PC-9 (cell line): ENCODE measurements at regions of chr9 and their contacts with region 1.

Region 1: GRCh38 chr9:613771-614347 is 227.6 kb upstream of the DMRT1 start:
- DNase-seq: peak; percentile 52 to 68
- H3K4me3 ChIP-seq: no peak overlapping the region
- H3K27ac ChIP-seq: no peak overlapping the region
- H3K4me1 ChIP-seq: no peaks in the 10 kb centered on the region
- H3K27me3 ChIP-seq: no peaks in the 10 kb centered on the region
- CTCF ChIP-seq: peak; percentile 72

Region 2: GRCh38 chr9:385818-386398 is 228.0 kb before region 1 on chr9:
- CTCF ChIA-PET with region 1: no interaction called
- POLR2A ChIA-PET with region 1: no interaction called
- intact Hi-C with region 1: loop called (anchors 1 kb)
- DNase-seq: peak; percentile 47 to 52
- H3K4me3 ChIP-seq: no peak overlapping the region
- H3K27ac ChIP-seq: no peak overlapping the region
- H3K4me1 ChIP-seq: no peaks in the 10 kb centered on the region
- H3K27me3 ChIP-seq: no peaks in the 10 kb centered on the region
- CTCF ChIP-seq: peak; percentile 93

Region 3: DNA sequence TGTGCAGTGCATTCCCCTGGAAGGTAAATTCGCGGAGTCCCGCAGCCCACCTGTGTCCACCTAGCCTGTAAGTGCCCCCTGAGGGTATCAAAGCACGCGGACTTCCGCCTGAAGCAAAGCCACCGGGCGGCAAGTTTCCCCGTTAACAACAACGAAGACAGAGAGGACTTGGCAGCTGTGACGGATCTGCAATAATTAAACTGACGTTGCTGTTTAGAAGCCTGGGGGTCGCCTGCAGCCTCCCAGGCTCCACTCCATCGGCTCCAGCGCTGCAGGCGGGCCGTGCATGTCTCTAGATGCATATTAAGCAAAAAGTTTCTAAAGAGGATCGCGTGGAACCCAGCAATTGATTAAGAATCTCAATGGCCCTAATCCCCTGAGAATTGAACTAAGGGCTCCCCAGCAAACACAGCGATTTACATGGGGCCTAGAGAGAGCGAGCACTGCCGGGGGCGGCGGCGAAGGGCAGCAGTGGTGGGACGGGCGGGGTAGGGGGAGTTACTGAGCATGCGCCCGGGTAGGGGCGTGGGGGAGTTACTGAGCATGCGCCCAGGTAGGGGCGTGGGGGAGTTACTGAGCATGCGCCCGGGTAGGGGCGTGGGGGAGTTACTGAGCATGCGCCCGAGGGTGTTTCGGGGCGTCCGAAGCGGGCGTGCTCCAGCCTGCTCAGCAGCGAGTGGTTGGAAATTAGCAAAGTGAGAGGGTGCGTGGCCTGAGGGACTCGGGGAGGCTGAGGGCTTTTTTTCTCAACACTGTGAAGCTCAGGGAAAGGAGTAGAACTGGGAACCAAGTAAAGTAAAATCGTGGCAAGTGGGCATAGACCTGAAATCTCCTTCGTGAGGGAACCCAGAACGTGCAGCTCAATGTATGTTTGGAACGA is 143.9 kb before region 1 on chr9:
- CTCF ChIA-PET with region 1: no interaction called
- POLR2A ChIA-PET with region 1: no interaction called
- intact Hi-C with region 1: no loop called
- DNase-seq: peak; percentile 73 to 79
- H3K4me3 ChIP-seq: peak overlapping the region; percentile 78
- H3K27ac ChIP-seq: peak overlapping the region; percentile 67
- H3K4me1 ChIP-seq: peaks cover 23% of the 10 kb centered on the region
- H3K27me3 ChIP-seq: no peaks in the 10 kb centered on the region
- CTCF ChIP-seq: no peak

Region 4: DNA sequence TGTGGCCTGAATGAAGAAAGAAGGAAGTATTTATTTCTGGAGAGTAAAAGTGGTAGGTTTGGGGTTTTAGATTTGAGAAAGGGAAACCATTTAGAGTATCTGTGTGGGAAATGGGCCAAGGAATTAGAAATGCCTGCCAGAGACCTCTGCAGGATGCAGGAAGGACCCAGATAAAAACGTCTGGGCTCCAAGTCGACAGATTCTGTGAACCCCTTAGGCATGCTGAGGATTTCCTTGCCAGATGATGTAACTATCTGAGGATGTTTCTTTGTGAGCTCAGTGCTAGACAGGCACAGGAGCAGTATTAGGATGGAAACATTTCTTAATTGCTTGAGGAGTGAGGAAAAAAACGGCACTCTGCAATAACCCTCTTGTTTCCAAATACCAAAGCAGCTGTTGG is 24.1 kb before region 1 on chr9:
- CTCF ChIA-PET with region 1: no interaction called
- POLR2A ChIA-PET with region 1: no interaction called
- intact Hi-C with region 1: no loop called
- DNase-seq: no peak
- H3K4me3 ChIP-seq: no peak overlapping the region
- H3K27ac ChIP-seq: peak overlapping the region; percentile 47
- H3K4me1 ChIP-seq: peaks cover 14% of the 10 kb centered on the region; the same call in 1 of the 2 replicates
- H3K27me3 ChIP-seq: no peaks in the 10 kb centered on the region
- CTCF ChIP-seq: no peak

Region 5: DNA sequence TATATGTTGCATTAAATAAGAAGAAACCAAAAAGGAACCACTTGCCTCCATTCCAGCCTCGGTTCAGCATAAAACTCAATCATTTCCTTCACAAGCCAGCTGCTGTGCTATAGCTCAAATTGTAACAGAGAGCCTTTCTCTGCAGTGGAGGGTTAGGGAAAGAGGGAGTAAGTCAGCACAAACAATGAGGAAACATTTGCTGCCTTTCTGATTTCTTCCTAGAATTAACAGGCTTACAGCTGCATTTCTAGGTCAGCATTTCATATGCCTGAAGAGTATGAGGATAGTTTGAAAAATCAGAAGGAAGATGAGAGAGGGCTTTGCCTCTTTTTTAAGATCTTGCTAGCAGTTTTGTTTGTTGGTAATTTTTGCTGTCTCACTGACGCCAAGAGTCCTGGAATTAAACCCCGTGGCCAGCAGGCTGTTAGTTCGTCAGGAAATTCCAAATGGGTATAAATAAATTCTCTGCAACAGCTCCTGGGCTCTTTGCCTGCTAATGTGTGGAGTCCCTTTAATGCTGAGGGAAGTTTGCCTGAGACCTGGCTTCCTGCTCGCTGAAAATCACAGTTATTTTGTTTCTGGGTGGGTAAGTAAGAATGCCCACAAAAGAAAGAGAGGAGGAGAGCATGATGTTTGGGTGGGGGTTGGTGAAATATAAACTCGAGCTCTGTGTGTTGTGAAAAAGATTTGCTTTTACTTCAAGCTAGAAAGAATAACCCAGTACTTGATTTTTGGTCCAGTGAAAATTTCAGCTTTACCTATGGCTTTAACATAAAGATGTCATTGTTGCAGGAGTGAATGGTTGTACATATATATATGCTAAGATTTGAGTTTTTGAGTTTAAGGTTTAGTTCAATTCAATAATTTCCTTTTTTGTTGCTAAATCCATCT is 79.6 kb after region 1 on chr9:
- CTCF ChIA-PET with region 1: no interaction called
- POLR2A ChIA-PET with region 1: no interaction called
- intact Hi-C with region 1: loop called (anchors 10 kb)
- DNase-seq: no peak
- H3K4me3 ChIP-seq: no peak overlapping the region
- H3K27ac ChIP-seq: peak overlapping the region; percentile 47; the same call in 1 of the 2 replicates
- H3K4me1 ChIP-seq: peaks cover 47% of the 10 kb centered on the region
- H3K27me3 ChIP-seq: no peaks in the 10 kb centered on the region
- CTCF ChIP-seq: no peak

Region 6: GRCh38 chr9:763692-764524 is 150.0 kb after region 1 on chr9:
- CTCF ChIA-PET with region 1: no interaction called
- POLR2A ChIA-PET with region 1: interaction called, 3 read pairs
- intact Hi-C with region 1: loop called (anchors 1 kb)
- DNase-seq: peak in 1 of 2 experiments; percentile 61
- H3K4me3 ChIP-seq: no peak overlapping the region
- H3K27ac ChIP-seq: no peak overlapping the region
- H3K4me1 ChIP-seq: no peaks in the 10 kb centered on the region
- H3K27me3 ChIP-seq: no peaks in the 10 kb centered on the region
- CTCF ChIP-seq: no peak

Region 7: GRCh38 chr9:1009101-1009707 is 395.3 kb after region 1 on chr9:
- CTCF ChIA-PET with region 1: no interaction called
- POLR2A ChIA-PET with region 1: no interaction called
- intact Hi-C with region 1: loop called (anchors 2 kb)
- DNase-seq: peak; percentile 38 to 64
- H3K4me3 ChIP-seq: no peak overlapping the region
- H3K27ac ChIP-seq: no peak overlapping the region
- H3K4me1 ChIP-seq: no peaks in the 10 kb centered on the region
- H3K27me3 ChIP-seq: no peaks in the 10 kb centered on the region
- CTCF ChIP-seq: peak; percentile 90